Psoas muscle (tissue), 8 donors: ENCODE measurements at regions of chr18 and their contacts with region 1.

Region 1: GRCh38 chr18:9147440-9148202 is 11.0 kb downstream of the ANKRD12 start:
- DNase-seq: no peak
- ATAC-seq: peak; percentile 82 to 93 (median 86)
- H3K4me3 ChIP-seq: no peak overlapping the region
- H3K27ac ChIP-seq: peak overlapping the region; percentile 41
- H3K4me1 ChIP-seq: peaks cover 88% of the 10 kb centered on the region
- H3K27me3 ChIP-seq: no peaks in the 10 kb centered on the region
- CTCF ChIP-seq: peak; percentile 70

Region 2: DNA sequence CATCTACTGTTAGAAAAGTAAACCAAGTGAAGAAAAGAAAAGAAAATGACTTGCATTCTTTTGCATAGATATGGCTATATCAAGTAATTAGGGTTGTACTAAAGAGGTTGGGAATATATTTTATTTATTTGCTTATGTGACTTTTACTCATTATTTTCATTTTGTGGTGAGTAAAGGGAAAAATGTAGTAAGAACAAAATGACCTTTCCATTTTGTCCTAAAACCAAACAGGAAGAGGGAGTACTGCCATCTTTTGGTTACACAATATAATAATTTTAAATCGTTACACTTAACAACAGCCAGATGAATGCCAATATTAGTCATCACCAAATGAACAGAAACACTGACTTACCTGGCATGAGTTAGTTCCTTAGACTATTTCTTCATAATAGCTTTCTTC is 92.4 kb before region 1 on chr18:
- intact Hi-C with region 1: no loop called
- DNase-seq: no peak
- ATAC-seq: peak in 3 of 4 donors; percentile 56 to 87 (median 63)
- H3K4me3 ChIP-seq: no peak overlapping the region
- H3K27ac ChIP-seq: no peak overlapping the region
- H3K4me1 ChIP-seq: no peaks in the 10 kb centered on the region
- H3K27me3 ChIP-seq: no peaks in the 10 kb centered on the region
- CTCF ChIP-seq: peak; percentile 7

Region 3: GRCh38 chr18:9066817-9067306 is 80.8 kb before region 1 on chr18:
- intact Hi-C with region 1: loop called in 1 of 2 experiments (anchors 2 kb)
- DNase-seq: no peak
- ATAC-seq: no peak
- H3K4me3 ChIP-seq: no peak overlapping the region
- H3K27ac ChIP-seq: no peak overlapping the region
- H3K4me1 ChIP-seq: peaks cover 12% of the 10 kb centered on the region
- H3K27me3 ChIP-seq: no peaks in the 10 kb centered on the region
- CTCF ChIP-seq: no peak

Region 4: GRCh38 chr18:9191658-9192256 is 44.1 kb after region 1 on chr18:
- intact Hi-C with region 1: loop called in 1 of 2 experiments (anchors 5 kb)
- DNase-seq: no peak
- ATAC-seq: peak in 1 of 4 donors; percentile 43
- H3K4me3 ChIP-seq: no peak overlapping the region
- H3K27ac ChIP-seq: no peak overlapping the region
- H3K4me1 ChIP-seq: peaks cover 6% of the 10 kb centered on the region
- H3K27me3 ChIP-seq: no peaks in the 10 kb centered on the region
- CTCF ChIP-seq: no peak

Region 5: DNA sequence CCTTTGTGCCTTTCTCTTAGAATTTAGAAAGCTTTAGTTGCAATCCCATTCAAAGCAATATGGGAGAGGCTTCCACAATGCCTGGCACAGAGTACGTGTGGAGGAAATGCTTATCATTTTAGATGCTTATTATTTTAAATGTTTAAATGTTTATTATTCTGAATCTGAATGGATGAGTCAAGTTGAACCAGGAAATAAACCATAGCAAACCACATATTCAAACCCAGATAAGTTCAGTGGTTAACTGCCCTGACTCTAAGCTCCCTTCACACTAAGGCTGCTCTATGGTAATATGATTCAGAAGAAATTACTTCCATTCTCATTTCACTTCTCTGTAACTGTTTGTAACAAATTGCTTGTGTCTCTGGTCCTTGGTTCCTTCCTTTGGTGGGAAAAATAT is 471.9 kb after region 1 on chr18:
- intact Hi-C with region 1: no loop called
- DNase-seq: no peak
- ATAC-seq: no peak
- H3K4me3 ChIP-seq: no peak overlapping the region
- H3K27ac ChIP-seq: no peak overlapping the region
- H3K4me1 ChIP-seq: peaks cover 6% of the 10 kb centered on the region
- H3K27me3 ChIP-seq: no peaks in the 10 kb centered on the region
- CTCF ChIP-seq: no peak